ENCODE measurements at regions of chr1 and their contacts with region 1.

Region 1: GRCh38 chr1:12177999-12178441 is 11.2 kb downstream of the TNFRSF1B start:
- DNase-seq: peak; percentile 62
- H3K4me3 Mint-ChIP-seq: peak overlapping the region; percentile 75
- H3K27ac Mint-ChIP-seq: peak overlapping the region; percentile 93
- H3K4me1 Mint-ChIP-seq: peaks cover 76% of the 10 kb centered on the region
- H3K27me3 Mint-ChIP-seq: no peaks in the 10 kb centered on the region

Region 2: DNA sequence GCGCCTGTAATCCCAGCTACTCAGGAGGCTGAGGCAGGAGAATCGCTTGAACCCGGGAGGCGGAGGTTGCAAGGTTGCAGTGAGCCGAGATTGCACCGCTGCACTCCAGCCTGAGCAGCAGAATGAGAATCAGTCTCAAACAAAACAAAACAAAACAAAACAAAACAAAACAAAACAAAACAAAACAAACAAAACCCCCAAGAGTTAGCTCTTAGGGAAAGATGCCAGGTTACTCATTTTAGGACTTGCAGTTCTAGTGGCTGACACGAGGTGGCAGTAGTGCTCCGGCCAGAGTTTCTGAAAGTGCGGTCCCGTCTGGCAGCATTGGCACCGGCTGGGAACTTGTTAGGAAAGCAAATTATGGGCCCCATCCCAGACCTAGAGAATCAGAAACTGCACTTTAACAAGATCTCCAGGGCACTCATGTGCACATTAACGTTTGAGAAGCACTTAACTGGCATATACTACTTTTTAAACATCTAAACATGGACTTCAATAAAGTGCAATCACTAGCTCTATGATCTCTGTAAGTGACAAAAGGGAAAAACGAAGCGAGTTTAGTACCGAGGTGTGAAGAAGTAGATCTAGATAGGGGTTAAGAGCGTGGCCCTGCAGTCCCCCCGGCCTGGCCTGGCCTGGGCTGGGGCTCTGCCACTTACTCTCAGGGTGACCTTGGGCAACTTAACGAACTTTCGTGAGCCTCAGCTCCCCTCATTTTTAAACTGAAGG is 53.2 kb before region 1 on chr1:
- intact Hi-C with region 1: loop called (anchors 2 kb)
- DNase-seq: peak; percentile 66
- H3K4me3 Mint-ChIP-seq: no peak overlapping the region
- H3K27ac Mint-ChIP-seq: peak overlapping the region; percentile 55
- H3K4me1 Mint-ChIP-seq: peaks cover 33% of the 10 kb centered on the region
- H3K27me3 Mint-ChIP-seq: no peaks in the 10 kb centered on the region

Region 3: GRCh38 chr1:12161662-12162458 is 16.2 kb before region 1 on chr1:
- intact Hi-C with region 1: loop called (anchors 2 kb)
- DNase-seq: peak; percentile 79
- H3K4me3 Mint-ChIP-seq: peak overlapping the region; percentile 56
- H3K27ac Mint-ChIP-seq: peak overlapping the region; percentile 96
- H3K4me1 Mint-ChIP-seq: peaks cover 68% of the 10 kb centered on the region
- H3K27me3 Mint-ChIP-seq: no peaks in the 10 kb centered on the region

Region 4: DNA sequence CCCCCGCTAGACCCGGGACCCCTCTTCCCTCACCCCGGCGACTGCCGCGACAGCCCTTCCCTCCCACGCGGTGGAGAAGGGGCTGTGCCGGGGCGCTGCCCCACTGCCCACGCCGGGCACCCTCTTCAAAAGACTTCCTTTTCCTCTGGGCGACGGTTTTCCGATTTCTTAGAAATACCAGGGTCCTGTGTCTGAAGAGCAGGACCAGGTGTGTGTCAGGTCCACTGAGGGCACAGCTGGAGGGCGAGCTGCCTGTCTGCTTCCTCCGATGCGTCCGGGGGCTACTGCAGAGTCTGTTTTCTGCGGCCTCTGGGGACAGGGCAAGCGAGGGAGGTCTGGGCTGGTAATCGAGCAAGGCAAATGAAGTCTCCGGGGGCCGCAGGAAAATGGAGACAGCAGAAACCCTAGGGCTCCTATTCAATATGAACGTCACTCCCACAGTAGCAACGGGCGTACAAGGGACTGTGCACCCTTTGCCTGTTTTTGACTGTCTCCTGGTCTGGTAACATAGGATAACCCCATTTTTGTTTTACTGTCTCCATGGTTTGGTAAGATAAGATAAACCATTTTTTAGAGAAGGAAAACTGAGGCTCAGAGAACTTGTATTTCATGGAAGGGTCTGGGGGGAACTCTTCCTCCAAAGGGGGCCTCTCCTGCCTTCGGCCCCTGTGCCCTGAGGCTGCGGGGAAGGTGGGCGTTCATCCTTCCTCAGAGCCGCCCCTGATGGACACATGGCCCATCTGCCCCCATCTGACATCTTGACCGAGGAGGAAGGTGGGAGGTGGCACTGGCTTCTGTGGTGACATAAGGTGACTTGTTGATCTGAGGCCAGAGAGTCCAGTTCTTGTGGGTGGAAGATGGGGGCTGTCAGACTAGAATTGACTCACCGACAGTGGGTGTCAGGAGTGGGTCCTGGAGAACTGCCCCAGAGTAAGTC is 10.3 kb before region 1 on chr1:
- intact Hi-C with region 1: loop called (anchors 1 kb)
- DNase-seq: no peak
- H3K4me3 Mint-ChIP-seq: peak overlapping the region; percentile 100
- H3K27ac Mint-ChIP-seq: peak overlapping the region; percentile 97
- H3K4me1 Mint-ChIP-seq: peaks cover 63% of the 10 kb centered on the region
- H3K27me3 Mint-ChIP-seq: no peaks in the 10 kb centered on the region

Region 5: GRCh38 chr1:12208764-12209494 is 30.9 kb after region 1 on chr1:
- intact Hi-C with region 1: loop called (anchors 2 kb)
- DNase-seq: peak; percentile 71
- H3K4me3 Mint-ChIP-seq: no peak overlapping the region
- H3K27ac Mint-ChIP-seq: peak overlapping the region; percentile 37
- H3K4me1 Mint-ChIP-seq: peaks cover 29% of the 10 kb centered on the region
- H3K27me3 Mint-ChIP-seq: peaks cover 2% of the 10 kb centered on the region

Measured in activated T-helper 2 cell treated with anti-CD3 and anti-CD28 coated beads, Interferon-gamma antibody, Interleukin-2, Interleukin-4, amounts not matched to agents 10 μg/mL and 5 μg/mL and 100 μg/mL, durations not matched to agents 14 hours and 24 hours and 36 hours (primary cell).